ENCODE measurements at regions of chr1 and their contacts with region 1.

Region 1: GRCh38 chr1:109773146-109773899 is 9.6 kb upstream of the EPS8L3 start:
- DNase-seq: peak; percentile 87
- H3K4me3 ChIP-seq: no peak overlapping the region
- H3K27ac ChIP-seq: no peak overlapping the region
- H3K4me1 ChIP-seq: no peaks in the 10 kb centered on the region
- H3K27me3 ChIP-seq: no peaks in the 10 kb centered on the region
- CTCF ChIP-seq: peak; percentile 75

Region 2: DNA sequence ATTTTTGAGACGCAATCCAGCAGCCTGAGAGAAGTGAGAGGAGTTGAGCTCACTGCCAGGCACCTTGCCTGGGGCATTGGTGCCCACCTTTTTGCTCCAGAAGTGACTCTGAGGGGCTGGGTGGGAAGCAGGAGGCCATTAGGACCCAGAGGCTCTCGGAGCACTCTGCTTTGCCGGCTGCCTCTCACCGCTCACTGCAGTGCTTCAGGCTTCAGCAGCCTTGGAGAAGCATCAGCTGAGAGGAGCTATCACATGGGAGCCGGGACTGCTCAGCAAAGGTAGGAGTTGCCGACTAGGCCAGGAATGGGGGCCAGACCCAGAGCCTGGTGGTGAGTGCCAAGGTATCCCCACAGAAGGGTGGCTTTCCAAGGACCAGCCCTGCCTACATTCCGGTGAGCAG is 233.6 kb before region 1 on chr1 and contains the start of gene GPR61:
- intact Hi-C with region 1: loop called (anchors 5 kb)
- DNase-seq: no peak
- H3K4me3 ChIP-seq: no peak within 1 kb of the TSS
- H3K27ac ChIP-seq: no peak within 1 kb of the TSS
- H3K4me1 ChIP-seq: no peaks in the 10 kb centered on the region
- H3K27me3 ChIP-seq: no peaks in the 10 kb centered on the region
- CTCF ChIP-seq: no peak
- total RNA-seq, gene GPR61: not detected

Region 3: DNA sequence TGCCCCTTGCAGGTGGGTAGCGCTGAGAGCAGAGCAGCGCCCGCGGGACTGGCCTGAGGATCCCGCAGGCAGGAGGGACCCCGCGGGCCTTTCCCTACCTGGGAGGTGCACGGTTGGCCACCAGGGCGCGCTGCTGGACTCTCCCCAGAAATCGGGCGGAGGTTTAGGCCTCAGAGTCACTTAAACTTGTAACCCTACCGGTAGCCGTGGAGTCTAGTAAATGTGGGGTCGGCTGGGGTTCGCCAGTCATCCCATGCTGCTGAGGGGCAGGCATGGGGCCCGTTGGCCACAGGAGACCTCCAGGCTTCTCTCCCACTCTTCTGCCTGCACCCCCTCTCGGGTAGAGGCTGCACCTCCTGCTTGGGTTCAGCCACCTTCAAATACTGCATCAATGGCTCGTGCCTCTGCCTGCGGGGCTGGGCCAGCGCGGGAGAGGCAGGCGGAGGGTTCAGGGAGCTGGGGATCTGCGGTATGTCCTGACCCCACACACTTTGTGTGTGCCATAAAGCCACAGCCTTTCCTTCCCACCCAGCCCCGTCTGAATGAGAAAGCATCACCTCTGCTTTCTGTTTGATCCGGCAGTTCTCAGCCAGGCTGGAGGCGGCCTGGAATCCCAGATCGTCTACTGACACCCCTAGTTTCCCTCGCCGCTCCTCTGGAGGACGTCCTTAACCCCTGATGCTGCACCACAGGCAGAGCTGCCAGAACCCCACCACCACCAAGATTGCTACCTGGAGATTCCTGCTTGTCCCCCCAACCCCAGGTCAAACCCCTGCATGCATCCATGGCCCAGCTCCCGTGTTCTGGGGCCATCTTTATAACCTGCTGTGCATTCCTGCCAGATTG is 129.7 kb before region 1 on chr1:
- intact Hi-C with region 1: loop called (anchors 2 kb)
- DNase-seq: peak; percentile 90
- H3K4me3 ChIP-seq: no peak overlapping the region
- H3K27ac ChIP-seq: no peak overlapping the region
- H3K4me1 ChIP-seq: peaks cover 4% of the 10 kb centered on the region
- H3K27me3 ChIP-seq: no peaks in the 10 kb centered on the region
- CTCF ChIP-seq: peak; percentile 91

Region 4: DNA sequence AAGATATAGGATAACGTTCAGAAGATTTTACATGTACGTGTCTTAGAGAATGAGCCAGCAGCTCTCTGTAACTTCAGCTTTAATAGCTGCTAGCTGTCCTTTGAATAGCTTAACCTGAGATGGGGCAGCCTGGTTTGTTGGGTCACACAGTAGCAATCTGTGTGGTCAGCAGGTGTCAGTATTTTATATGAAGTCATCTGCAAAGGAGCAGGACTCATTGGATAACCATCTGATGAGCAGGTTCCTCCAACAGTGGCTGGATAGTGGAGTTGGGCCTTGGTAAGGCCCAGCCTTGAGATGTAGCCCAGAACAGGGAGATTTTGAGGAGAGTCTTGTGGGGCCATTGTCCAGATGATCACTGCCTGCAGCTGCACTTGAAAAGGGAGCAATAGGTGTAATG is 54.8 kb before region 1 on chr1:
- intact Hi-C with region 1: loop called (anchors 2 kb)
- DNase-seq: no peak
- H3K4me3 ChIP-seq: no peak overlapping the region
- H3K27ac ChIP-seq: no peak overlapping the region
- H3K4me1 ChIP-seq: no peaks in the 10 kb centered on the region
- H3K27me3 ChIP-seq: no peaks in the 10 kb centered on the region
- CTCF ChIP-seq: peak; percentile 19

Region 5: GRCh38 chr1:109910123-109910962 is 137.0 kb after region 1 on chr1 and contains the start of gene CSF1:
- intact Hi-C with region 1: loop called (anchors 5 kb)
- DNase-seq: peak; percentile 84
- H3K4me3 ChIP-seq: peak within 1 kb of the TSS; percentile 76
- H3K27ac ChIP-seq: peak within 1 kb of the TSS; percentile 71
- H3K4me1 ChIP-seq: no peaks in the 10 kb centered on the region
- H3K27me3 ChIP-seq: no peaks in the 10 kb centered on the region
- CTCF ChIP-seq: no peak
- total RNA-seq, gene CSF1: 14.1 to 18.1 TPM

Region 6: GRCh38 chr1:109984456-109985275 is 211.3 kb after region 1 on chr1 and contains the start of gene AHCYL1:
- intact Hi-C with region 1: loop called (anchors 1 kb)
- DNase-seq: peak; percentile 99
- H3K4me3 ChIP-seq: peak within 1 kb of the TSS; percentile 85
- H3K27ac ChIP-seq: peak within 1 kb of the TSS; percentile 91
- H3K4me1 ChIP-seq: peaks cover 19% of the 10 kb centered on the region
- H3K27me3 ChIP-seq: no peaks in the 10 kb centered on the region
- CTCF ChIP-seq: peak; percentile 98
- total RNA-seq, gene AHCYL1: 108 to 115 TPM

Region 7: GRCh38 chr1:110243574-110243973 is 470.3 kb after region 1 on chr1:
- intact Hi-C with region 1: no loop called
- DNase-seq: no peak
- H3K4me3 ChIP-seq: no peak overlapping the region
- H3K27ac ChIP-seq: no peak overlapping the region
- H3K4me1 ChIP-seq: no peaks in the 10 kb centered on the region
- H3K27me3 ChIP-seq: no peaks in the 10 kb centered on the region
- CTCF ChIP-seq: no peak

Measured in colonic mucosa (tissue), 4 donors.